ENCODE measurements at regions of chr6 and their contacts with region 1.

Region 1: GRCh38 chr6:105179244-105180065 is at the start of gene POPDC3:
- DNase-seq: no peak
- ATAC-seq: peak; percentile 71
- total RNA-seq, gene POPDC3: 47.8 TPM

Region 2: GRCh38 chr6:105272786-105273185 is 93.3 kb after region 1 on chr6:
- intact Hi-C with region 1: loop called (anchors 5 kb)
- DNase-seq: no peak
- ATAC-seq: peak; percentile 75

Region 3: DNA sequence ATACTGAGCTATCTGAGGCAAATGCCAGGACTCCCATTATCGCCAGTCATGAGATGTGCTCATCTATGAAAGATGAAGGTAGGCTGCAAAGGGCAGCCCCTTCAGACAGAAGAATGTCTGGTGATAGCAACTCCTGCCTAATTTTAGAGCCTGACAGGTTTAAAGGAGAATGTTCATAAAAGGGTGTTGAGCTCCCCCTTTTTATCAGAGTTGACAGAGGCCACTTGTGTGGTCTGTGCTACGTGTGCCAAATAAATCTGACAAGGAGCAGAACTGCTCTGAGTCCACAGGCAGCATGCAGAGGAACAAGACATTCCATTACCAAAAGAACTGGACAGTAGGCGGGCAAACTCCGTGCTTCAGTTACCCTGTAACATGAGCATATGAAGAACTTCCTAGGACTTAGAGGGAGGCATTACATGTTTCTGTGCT is 121.6 kb after region 1 on chr6:
- intact Hi-C with region 1: loop called (anchors 2 kb)
- DNase-seq: no peak
- ATAC-seq: peak; percentile 88